ENCODE measurements at regions of chr9 and their contacts with region 1.

Region 1: GRCh38 chr9:131194762-131195161 is 69.4 kb downstream of the NUP214 start:
- DNase-seq: no peak

Region 2: DNA sequence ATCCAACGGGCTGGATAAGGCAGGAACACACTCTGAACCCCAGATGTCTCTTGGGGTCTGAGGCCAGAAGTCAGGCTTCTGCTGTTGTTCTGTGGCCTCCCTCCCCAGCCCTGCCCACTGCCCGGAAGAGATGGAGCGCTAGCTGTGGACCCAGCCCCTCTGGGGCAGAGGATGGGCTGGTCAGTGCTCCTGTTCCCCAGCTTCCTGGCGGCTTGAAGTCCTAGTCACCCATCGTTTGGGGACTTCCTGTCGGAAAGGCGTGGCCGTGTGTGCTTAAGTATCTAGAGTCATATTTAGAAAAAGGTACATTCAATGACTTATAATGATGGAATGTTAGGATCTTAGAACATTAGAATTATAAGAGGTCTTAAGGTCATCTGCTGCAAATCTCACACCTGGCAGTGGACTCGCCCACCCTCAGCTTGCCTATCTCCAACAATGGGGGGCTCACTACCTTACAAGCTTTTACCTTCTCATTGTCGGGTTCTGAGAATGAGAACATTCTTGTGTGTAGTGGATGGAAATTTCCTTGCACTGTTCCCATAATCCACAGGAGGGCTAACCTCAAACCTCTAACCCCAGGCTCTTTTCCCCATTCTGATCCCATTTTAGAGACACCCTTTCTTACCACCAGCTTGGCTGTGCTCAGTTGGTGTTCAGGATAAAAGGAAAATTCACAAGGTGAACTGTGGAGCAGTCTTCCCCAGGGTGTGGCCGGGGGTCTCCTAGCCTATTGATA is 111.8 kb before region 1 on chr9:
- intact Hi-C with region 1: no loop called
- DNase-seq: no peak

Region 3: GRCh38 chr9:131124824-131125127 is 70.0 kb before region 1 on chr9:
- intact Hi-C with region 1: no loop called
- DNase-seq: no peak

Region 4: GRCh38 chr9:131227112-131227958 is 32.6 kb after region 1 on chr9:
- intact Hi-C with region 1: loop called (anchors 5 kb)
- DNase-seq: no peak

Region 5: DNA sequence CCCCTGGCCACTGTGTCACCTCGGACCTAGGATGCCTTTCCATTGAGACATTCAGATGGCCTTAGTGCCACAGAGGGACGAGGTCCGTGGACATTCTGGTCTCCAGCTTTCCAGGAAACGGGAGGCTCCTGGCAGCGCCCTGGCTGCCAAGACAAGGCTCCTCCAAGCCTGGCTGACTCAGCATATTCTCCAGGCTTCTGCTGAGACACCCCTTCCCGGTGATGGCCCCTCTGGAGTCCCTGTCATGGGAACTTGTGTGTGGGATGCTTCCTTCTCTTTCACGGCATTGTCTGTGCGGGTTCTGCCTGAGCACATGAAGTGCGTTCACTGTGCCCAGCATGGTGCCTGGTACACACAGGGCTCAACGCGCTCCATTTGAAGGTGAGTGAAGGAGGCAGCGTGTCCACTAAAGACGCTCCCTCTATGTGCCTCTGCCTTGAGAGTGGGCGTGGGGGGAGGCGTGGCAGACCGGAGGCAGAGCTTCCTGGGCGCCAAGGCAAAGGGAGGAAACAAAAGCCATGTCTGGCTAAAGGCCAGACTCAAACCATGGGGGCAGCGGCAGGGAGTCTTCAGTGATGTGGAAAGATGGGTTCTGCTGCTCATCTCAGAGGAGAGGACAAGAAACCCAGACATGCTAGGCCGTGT is 152.7 kb after region 1 on chr9:
- intact Hi-C with region 1: no loop called
- DNase-seq: no peak